Activated B cell treated with CpG ODN at 0.5 μM for 24 hours (primary cell): ENCODE measurements at regions of chr3 and their contacts with region 1.

Region 1: GRCh38 chr3:196073188-196073838 is 8.6 kb downstream of the TFRC start:
- DNase-seq: peak; percentile 39
- ATAC-seq: peak; percentile 97
- H3K4me3 Mint-ChIP-seq: no peak overlapping the region
- H3K27ac Mint-ChIP-seq: no peak overlapping the region
- H3K4me1 Mint-ChIP-seq: peaks cover 31% of the 10 kb centered on the region
- H3K27me3 Mint-ChIP-seq: no peaks in the 10 kb centered on the region
- CTCF ChIP-seq: no peak

Region 2: GRCh38 chr3:196159952-196160804 is 86.9 kb after region 1 on chr3:
- CTCF ChIA-PET with region 1: interaction called, 14 read pairs
- POLR2A ChIA-PET with region 1: interaction called, 12 read pairs
- intact Hi-C with region 1: no loop called
- DNase-seq: peak; percentile 50
- ATAC-seq: peak; percentile 99
- H3K4me3 Mint-ChIP-seq: peak overlapping the region; percentile 73
- H3K27ac Mint-ChIP-seq: peak overlapping the region; percentile 92
- H3K4me1 Mint-ChIP-seq: peaks cover 22% of the 10 kb centered on the region
- H3K27me3 Mint-ChIP-seq: no peaks in the 10 kb centered on the region
- CTCF ChIP-seq: no peak

Region 3: GRCh38 chr3:196186651-196187573 is 113.6 kb after region 1 on chr3:
- CTCF ChIA-PET with region 1: interaction called, 93 read pairs
- POLR2A ChIA-PET with region 1: interaction called, 50 read pairs
- intact Hi-C with region 1: loop called (anchors 1 kb)
- DNase-seq: no peak
- ATAC-seq: peak; percentile 62
- H3K4me3 Mint-ChIP-seq: peak overlapping the region; percentile 62
- H3K27ac Mint-ChIP-seq: peak overlapping the region; percentile 90
- H3K4me1 Mint-ChIP-seq: peaks cover 58% of the 10 kb centered on the region
- H3K27me3 Mint-ChIP-seq: no peaks in the 10 kb centered on the region
- CTCF ChIP-seq: no peak

Region 4: DNA sequence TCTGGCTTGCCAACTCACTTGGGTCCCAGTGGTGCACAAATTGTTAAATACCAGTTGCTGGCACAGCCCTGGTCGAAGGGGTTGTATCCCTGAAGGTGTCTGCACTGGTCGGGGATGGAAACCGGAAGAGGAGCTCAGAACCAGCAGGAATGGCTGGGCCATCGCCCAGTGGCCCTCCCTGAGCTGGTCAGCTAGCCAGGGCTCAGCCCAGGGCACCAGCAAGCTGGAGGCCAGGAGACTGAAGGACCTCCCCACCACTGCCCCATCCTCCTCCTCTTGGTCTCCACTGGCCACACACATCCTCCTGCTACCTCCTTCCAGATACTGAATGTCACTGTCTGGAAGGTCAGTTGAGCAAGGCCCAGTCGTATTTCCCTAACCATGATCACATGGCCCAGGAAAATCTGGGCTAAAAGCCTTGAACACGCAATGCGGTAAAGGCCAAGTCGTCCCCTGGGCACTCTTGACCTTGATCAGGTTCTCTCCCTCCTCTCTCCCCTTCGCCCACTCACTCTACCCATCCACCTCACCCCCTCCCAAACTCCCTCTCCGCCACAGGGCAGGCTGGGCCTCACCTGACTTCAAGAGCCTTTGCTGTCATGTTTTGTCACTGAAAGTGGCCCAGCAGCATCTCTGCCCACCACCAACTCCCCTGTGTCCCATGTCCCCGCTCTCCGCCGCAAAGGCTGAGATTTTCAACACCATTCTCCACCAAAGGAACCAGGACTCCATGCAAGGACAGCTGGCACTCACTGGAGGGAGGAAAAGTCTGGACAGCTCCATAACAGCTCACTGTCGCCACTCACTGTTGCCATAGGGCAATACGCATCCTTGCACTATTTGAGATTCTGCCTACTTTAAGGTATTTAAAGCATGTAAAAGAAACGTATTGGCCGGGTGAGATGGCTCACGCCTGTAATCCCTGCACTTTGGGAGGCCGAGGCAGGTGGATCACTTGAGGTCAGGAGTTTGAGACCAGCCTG is 125.7 kb after region 1 on chr3:
- CTCF ChIA-PET with region 1: interaction called, 172 read pairs
- POLR2A ChIA-PET with region 1: interaction called, 22 read pairs
- intact Hi-C with region 1: loop called (anchors 1 kb)
- DNase-seq: no peak
- ATAC-seq: no peak
- H3K4me3 Mint-ChIP-seq: no peak overlapping the region
- H3K27ac Mint-ChIP-seq: no peak overlapping the region
- H3K4me1 Mint-ChIP-seq: peaks cover 32% of the 10 kb centered on the region
- H3K27me3 Mint-ChIP-seq: no peaks in the 10 kb centered on the region
- CTCF ChIP-seq: no peak

Region 5: DNA sequence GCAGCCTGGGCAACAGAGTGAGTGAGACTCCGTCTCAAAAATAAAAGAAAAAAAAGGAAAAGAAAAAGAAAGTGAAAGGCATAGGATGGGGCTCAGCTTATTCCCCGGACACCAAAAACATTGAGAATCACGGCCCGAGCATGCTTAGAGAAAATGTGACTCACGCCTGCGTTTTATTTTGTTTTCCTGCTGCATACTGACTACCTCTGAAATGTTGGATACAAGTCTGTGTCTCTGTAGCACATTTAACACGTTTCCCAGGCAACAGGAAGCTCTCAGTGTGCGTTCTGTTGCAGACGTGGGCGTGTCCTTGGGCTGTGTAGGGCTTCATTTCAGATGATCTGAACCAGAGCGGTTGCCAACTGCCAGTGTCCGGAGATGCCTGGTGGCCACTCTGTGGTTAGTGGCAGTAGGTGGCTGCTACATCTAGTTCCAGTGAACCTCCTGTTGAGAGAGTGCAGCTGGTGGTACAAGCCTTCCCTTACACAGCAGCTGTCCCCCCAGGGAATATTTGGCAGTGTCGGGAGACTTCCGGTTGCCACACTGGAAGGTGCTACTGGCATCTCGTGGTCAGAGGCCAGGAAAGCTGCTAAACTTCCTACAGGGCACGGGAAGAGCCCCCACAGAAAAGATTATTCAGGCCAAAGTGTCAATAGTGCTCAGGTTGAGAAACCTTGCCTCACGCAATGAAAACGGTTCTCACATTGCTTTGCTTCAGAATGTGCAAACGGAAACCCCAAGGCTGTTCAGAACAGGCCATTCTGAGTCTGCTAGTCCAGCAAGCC is 146.1 kb after region 1 on chr3:
- CTCF ChIA-PET with region 1: interaction called, 11 read pairs
- POLR2A ChIA-PET with region 1: no interaction called
- intact Hi-C with region 1: no loop called
- DNase-seq: no peak
- ATAC-seq: peak; percentile 85
- H3K4me3 Mint-ChIP-seq: peak overlapping the region; percentile 88
- H3K27ac Mint-ChIP-seq: peak overlapping the region; percentile 70
- H3K4me1 Mint-ChIP-seq: peaks cover 16% of the 10 kb centered on the region
- H3K27me3 Mint-ChIP-seq: no peaks in the 10 kb centered on the region
- CTCF ChIP-seq: no peak